Heart right ventricle (tissue), 16 donors: ENCODE measurements at regions of chr6 and their contacts with region 1.

Region 1: DNA sequence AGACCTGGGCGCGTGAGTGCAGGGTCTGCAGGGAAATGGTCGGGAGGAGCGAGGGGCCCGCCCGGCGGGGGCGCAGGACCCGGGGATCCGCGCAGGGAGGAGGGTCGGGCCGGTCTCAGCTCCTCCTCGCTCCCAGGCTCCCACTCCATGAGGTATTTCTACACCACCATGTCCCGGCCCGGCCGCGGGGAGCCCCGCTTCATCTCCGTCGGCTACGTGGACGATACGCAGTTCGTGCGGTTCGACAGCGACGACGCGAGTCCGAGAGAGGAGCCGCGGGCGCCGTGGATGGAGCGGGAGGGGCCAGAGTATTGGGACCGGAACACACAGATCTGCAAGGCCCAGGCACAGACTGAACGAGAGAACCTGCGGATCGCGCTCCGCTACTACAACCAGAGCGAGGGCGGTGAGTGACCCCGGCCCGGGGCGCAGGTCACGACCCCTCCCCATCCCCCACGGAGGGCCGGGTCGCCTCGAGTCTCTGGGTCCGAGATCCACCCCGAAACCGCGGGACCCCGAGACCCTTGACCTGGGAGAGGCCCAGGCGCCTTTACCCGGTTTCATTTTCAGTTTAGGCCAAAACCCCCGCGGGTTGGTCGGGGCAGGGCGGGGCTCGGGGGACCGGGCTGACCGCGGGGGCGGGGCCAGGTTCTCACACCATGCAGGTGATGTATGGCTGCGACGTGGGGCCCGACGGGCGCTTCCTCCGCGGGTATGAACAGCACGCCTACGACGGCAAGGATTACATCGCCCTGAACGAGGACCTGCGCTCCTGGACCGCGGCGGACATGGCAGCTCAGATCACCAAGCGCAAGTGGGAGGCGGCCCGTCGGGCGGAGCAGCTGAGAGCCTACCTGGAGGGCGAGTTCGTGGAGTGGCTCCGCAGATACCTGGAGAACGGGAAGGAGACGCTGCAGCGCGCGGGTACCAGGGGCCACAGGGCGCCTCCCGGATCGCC is 54.2 kb upstream of the HLA-A start:
- DNase-seq: peak; percentile 79 to 82
- ATAC-seq: peak; percentile 87 to 96 (median 92)
- H3K4me3 ChIP-seq: peak overlapping the region; percentile 52 to 89 (median 75)
- H3K27ac ChIP-seq: peak overlapping the region; percentile 35 to 96 (median 90)
- H3K4me1 ChIP-seq: peaks cover 0 to 14% (median 7%) of the 10 kb centered on the region in 9 donors
- H3K27me3 ChIP-seq: no peaks in the 10 kb centered on the region
- CTCF ChIP-seq: no peak

Region 2: GRCh38 chr6:29926413-29927274 is 38.5 kb after region 1 on chr6:
- intact Hi-C with region 1: loop called in 2 of 10 experiments (anchors 5 kb)
- DNase-seq: peak; percentile 74 to 77
- ATAC-seq: peak; percentile 85 to 96 (median 90)
- H3K4me3 ChIP-seq: peak overlapping the region; percentile 44 to 81 (median 62)
- H3K27ac ChIP-seq: peak overlapping the region; percentile 68 to 97 (median 88)
- H3K4me1 ChIP-seq: peaks cover 0 to 23% (median 12%) of the 10 kb centered on the region in 9 donors
- H3K27me3 ChIP-seq: no peaks in the 10 kb centered on the region
- CTCF ChIP-seq: no peak

Region 3: DNA sequence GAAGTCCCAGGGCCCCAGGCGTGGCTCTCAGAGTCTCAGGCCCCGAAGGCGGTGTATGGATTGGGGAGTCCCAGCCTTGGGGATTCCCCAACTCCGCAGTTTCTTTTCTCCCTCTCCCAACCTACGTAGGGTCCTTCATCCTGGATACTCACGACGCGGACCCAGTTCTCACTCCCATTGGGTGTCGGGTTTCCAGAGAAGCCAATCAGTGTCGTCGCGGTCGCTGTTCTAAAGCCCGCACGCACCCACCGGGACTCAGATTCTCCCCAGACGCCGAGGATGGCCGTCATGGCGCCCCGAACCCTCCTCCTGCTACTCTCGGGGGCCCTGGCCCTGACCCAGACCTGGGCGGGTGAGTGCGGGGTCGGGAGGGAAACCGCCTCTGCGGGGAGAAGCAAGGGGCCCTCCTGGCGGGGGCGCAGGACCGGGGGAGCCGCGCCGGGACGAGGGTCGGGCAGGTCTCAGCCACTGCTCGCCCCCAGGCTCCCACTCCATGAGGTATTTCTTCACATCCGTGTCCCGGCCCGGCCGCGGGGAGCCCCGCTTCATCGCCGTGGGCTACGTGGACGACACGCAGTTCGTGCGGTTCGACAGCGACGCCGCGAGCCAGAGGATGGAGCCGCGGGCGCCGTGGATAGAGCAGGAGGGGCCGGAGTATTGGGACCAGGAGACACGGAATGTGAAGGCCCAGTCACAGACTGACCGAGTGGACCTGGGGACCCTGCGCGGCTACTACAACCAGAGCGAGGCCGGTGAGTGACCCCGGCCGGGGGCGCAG is 54.4 kb after region 1 on chr6 and contains the start of gene HLA-A:
- intact Hi-C with region 1: loop called in 2 of 10 experiments (anchors 2 to 10 kb)
- DNase-seq: peak; percentile 91 to 96
- ATAC-seq: peak; percentile 97 to 98 (median 98)
- H3K4me3 ChIP-seq: peak within 1 kb of the TSS; percentile 53 to 96 (median 78)
- H3K27ac ChIP-seq: peak within 1 kb of the TSS; percentile 73 to 98 (median 91)
- H3K4me1 ChIP-seq: peaks cover 0 to 42% (median 29%) of the 10 kb centered on the region in 9 donors
- H3K27me3 ChIP-seq: no peaks in the 10 kb centered on the region
- CTCF ChIP-seq: no peak
- total RNA-seq, gene HLA-A: 218 to 1,594 (median 276) TPM